Mammary epithelial cell (primary cell): ENCODE measurements at regions of chr11 and their contacts with region 1.

Region 1: GRCh38 chr11:77047007-77047927 is 13.1 kb downstream of the B3GNT6 start:
- DNase-seq: peak; percentile 89
- H3K4me3 ChIP-seq: peak overlapping the region; percentile 39 to 55 (median 40)
- H3K27ac ChIP-seq: peak overlapping the region; percentile 57
- H3K4me1 ChIP-seq: peaks cover 12% of the 10 kb centered on the region
- H3K27me3 ChIP-seq: no peaks in the 10 kb centered on the region
- CTCF ChIP-seq: peak; percentile 62 to 63

Region 2: DNA sequence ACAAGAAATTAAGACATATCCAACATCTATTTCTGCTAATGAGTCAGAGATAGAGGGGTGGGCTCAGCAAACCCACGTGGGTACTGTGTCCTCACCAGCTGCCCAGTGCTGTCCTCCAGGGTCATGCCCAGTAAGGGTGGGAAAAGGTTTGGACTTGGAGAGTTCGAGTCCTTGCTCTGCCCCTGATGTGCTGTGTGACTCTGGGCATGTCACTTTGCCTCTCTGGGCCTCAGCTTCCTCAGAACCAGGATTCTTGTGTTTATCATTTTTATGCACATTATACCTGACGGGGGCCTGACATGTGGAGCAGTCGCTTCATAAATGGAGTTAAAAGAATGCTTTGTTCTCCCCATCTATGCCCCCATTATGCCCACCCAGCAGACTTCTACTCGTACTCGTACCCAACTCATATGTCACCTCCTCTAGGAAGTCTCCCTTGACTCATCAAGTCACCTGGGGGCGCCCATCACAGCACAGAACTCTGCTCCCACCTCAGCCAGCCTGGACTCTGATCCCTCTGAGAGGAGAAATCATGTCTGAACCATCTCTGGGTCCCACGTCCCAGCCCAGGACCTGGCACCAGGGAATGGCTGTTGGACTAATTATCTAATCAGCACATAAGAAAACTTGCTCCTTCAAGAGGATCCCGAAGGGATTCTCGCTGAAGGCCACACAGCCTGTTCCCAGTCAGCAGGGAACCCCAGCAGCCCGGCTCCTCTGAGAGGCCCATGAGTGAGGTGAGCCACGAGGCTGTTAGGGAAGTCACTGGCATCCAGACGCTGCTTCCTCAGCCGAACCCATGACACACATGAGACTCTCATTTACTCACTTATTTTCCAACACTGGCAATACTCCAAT is 302.9 kb before region 1 on chr11:
- CTCF ChIA-PET with region 1: no interaction called
- dilution Hi-C with region 1: no loop called
- in situ Hi-C with region 1: loop called in 1 of 2 experiments (anchors 25 kb)
- intact Hi-C with region 1: no loop called
- DNase-seq: no peak
- H3K4me3 ChIP-seq: no peak overlapping the region
- H3K27ac ChIP-seq: no peak overlapping the region
- H3K4me1 ChIP-seq: no peaks in the 10 kb centered on the region
- H3K27me3 ChIP-seq: no peaks in the 10 kb centered on the region
- CTCF ChIP-seq: no peak

Region 3: DNA sequence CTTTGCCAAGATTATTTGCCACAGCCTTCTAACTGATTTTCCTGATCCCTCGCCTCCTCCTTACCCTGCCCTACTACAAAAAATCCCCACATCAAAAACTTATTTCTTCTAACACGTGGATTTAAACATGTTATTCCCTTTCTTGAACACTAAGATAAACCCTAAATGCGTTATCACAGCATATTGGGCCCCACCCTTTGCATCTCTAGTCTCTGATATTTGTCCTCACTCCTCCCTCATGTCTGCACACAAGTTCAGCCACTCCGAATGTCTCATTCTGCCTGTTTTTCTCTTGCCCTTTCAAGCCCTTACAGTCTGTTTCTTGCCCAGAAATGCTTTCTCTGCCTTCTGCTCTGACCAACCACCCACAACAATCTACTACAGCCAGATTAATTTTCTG is 197.1 kb before region 1 on chr11:
- CTCF ChIA-PET with region 1: no interaction called
- dilution Hi-C with region 1: no loop called
- in situ Hi-C with region 1: no loop called
- intact Hi-C with region 1: no loop called
- DNase-seq: no peak
- H3K4me3 ChIP-seq: no peak overlapping the region
- H3K27ac ChIP-seq: no peak overlapping the region
- H3K4me1 ChIP-seq: peaks cover 10% of the 10 kb centered on the region
- H3K27me3 ChIP-seq: no peaks in the 10 kb centered on the region
- CTCF ChIP-seq: no peak

Region 4: GRCh38 chr11:76860539-76861475 is 186.5 kb before region 1 on chr11 and contains the start of gene ACER3:
- CTCF ChIA-PET with region 1: interaction called, 14 read pairs
- dilution Hi-C with region 1: no loop called
- in situ Hi-C with region 1: no loop called
- intact Hi-C with region 1: no loop called
- DNase-seq: peak; percentile 87
- H3K4me3 ChIP-seq: peak within 1 kb of the TSS; percentile 54 to 84 (median 74)
- H3K27ac ChIP-seq: peak within 1 kb of the TSS; percentile 51
- H3K4me1 ChIP-seq: peaks cover 10% of the 10 kb centered on the region
- H3K27me3 ChIP-seq: no peaks in the 10 kb centered on the region
- CTCF ChIP-seq: peak in 1 of 2 donors; percentile 39
- total RNA-seq, gene ACER3: 21.8 to 46.0 TPM

Region 5: DNA sequence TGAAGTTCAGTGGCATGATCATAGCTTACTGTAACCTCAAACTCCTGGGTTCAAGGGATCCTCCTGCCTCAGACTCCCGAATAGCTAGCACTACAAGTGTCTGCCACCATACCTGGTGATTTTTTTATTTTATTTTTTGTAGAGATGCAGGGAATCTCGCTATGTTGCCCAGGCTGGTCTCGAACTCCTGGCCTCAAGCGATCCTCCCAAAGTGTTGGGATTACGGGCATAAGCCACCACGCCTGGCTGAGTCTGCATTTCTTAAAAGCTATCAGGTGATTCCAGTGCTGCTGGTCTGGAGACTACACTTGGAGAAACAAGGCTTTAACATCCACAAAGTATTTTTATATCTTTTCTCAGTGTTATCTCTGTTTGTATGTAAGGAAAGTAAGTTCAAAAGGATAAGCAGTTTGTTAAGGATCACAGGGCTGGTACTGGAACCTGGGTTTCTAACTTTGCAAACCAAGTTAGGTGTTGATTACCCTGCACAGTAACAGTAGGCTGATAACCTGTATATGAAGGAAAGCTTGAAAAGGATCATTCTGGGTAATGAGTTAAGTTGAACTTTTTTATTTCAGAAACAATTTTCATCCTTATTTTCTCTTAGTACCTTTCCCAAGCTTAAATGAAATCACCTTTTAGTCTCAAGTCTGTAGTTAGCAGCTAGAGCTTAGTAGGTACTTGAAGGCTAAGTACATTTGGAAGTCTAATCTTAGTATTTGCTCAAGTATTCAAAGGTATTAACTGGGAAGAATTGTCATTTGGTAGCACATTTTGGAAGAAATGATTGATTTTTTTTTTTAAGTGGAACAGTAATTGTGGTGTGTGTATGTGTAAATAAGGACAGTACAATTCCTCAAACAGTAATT is 174.1 kb before region 1 on chr11:
- CTCF ChIA-PET with region 1: no interaction called
- dilution Hi-C with region 1: no loop called
- in situ Hi-C with region 1: no loop called
- intact Hi-C with region 1: no loop called
- DNase-seq: no peak
- H3K4me3 ChIP-seq: no peak overlapping the region
- H3K27ac ChIP-seq: no peak overlapping the region
- H3K4me1 ChIP-seq: no peaks in the 10 kb centered on the region
- H3K27me3 ChIP-seq: no peaks in the 10 kb centered on the region
- CTCF ChIP-seq: no peak

Region 6: DNA sequence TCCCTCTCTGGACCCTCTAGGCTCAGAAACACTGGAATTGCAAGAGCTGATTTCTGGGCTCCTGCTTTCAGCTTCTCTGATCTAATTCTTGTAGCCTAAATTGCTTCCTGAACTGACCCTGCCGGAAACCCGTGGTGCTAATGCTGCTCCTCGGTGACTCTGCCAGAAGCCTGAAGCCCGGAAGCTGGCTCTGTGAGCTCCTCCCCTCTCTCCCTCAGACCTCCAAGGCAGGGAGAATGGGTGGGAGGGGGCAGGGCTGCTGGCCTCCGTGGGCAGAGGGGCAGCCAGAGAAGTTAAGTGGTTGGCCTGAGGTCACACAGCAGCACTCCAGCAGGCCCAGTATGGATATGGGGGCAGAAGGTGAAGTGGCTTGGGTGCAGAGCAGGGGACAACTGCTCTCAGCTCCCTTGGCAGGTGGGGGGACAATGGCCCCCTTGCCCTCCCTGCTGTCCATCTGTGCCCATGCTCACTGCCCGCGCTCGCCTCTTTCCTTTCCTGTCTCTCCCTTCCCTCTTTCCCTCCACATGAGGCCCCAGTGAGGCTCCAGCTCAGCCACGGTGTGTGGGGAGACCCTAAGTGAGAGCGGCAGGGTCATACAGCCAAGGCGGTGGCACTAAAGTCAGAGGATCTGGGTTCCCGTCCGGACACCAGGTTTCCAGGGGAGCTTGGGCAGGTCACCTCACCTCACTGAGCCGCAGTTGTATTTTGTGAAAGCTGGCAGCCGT is 35.7 kb after region 1 on chr11:
- CTCF ChIA-PET with region 1: no interaction called
- dilution Hi-C with region 1: loop called (anchors 5 kb)
- in situ Hi-C with region 1: no loop called
- intact Hi-C with region 1: no loop called
- DNase-seq: no peak
- H3K4me3 ChIP-seq: no peak overlapping the region
- H3K27ac ChIP-seq: no peak overlapping the region
- H3K4me1 ChIP-seq: no peaks in the 10 kb centered on the region
- H3K27me3 ChIP-seq: peaks cover 1% of the 10 kb centered on the region
- CTCF ChIP-seq: no peak

Region 7: DNA sequence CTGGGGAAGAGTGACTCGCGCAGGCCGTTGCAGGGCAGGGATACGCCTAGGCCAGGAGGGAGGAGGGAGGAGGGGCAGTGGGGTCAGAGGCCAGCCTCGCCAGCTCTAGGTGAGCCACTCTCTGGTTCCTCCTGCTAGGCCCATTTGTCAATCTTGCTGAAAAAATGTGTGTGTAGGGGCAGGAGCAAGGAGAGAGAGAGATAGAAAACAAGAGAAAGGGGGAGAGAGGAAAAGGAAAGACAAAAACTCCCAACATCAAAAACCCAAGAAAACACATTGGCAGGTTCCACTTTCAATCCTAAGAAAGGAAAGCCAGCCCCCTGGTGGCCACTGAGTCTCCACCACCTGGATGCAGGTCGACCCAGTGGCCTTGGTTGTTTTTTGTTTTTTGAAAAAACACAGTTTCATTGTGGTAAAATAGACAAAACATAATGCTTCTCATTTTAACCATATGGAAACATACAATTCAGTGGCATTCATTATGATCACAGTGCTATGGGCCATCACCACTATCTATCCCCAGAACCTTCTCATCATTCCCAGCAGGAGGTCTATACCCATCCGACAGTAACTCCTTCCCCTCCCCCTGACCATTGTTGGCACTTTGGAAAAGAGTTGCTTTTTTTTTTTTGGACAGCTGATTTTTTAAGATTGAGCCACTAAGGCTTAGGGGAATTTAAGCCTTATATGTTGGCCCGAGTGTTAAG is 66.3 kb after region 1 on chr11:
- CTCF ChIA-PET with region 1: interaction called, 3 read pairs
- dilution Hi-C with region 1: no loop called
- in situ Hi-C with region 1: no loop called
- intact Hi-C with region 1: loop called (anchors 1 kb)
- DNase-seq: no peak
- H3K4me3 ChIP-seq: no peak overlapping the region
- H3K27ac ChIP-seq: no peak overlapping the region
- H3K4me1 ChIP-seq: no peaks in the 10 kb centered on the region
- H3K27me3 ChIP-seq: no peaks in the 10 kb centered on the region
- CTCF ChIP-seq: peak; percentile 63 to 75

Region 8: DNA sequence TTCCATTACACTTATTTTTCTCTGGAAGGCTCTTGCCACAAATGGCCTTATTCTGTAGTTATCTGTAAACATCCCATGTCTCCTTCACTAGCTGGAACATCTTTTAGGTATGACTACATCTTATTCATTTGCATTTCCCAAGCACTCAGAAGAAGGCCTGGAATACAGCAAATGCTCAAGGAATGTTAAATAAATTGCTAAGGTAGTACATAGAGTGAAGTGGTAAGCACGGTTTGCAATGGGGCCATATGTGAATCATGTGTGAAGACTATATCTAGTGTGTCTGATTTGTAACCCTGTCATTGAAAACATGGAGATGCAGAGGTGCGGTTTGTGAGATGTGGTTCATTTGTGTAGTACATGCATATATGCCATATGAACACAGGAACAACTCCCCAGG is 220.7 kb after region 1 on chr11:
- CTCF ChIA-PET with region 1: no interaction called
- dilution Hi-C with region 1: no loop called
- in situ Hi-C with region 1: no loop called
- intact Hi-C with region 1: no loop called
- DNase-seq: peak; percentile 51
- H3K4me3 ChIP-seq: no peak overlapping the region
- H3K27ac ChIP-seq: no peak overlapping the region
- H3K4me1 ChIP-seq: peaks cover 12% of the 10 kb centered on the region
- H3K27me3 ChIP-seq: no peaks in the 10 kb centered on the region
- CTCF ChIP-seq: no peak